ENCODE measurements at regions of chr3 and their contacts with region 1.

Region 1: DNA sequence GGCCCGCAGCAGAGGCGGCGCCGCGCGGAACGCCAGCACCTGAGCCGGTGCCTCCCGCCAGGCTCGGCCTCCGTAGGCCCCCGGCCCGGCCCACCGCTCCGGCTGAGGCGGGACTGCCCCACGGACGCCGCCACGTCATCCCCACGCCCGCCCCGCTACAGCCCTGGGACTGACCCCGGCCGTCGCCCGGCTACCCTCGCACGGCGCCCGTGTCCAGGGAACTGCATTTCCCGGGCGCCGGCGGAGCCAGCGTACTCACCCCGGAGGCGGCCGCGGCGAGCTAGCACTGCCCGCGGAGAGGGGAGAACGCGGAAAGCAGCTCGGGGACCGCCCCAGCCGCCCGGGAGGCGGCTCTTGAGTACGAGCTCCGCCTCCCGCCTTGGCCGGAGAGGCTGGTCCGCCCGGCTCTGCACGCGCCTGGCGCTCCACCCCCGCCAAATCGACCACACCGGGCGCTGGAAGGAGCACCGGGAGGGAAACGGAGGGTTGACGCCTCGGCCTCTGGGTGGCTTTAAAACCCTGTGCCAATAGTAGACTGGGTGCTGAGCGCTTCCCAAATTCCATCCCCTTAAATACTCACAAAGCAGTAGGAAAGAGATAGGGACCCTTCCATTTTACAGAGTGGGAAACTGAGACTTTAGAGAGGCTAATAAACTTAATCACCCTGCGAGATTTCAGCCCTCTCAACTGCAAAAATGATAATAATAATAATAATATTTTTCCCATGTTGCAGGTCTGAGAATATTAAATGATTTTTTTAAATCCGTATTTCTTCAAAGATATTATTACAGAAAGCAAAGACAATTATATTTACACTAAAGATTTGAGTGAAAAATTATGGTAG is at the start of gene B4GALT4:
- DNase-seq: peak; percentile 94
- H3K4me3 Mint-ChIP-seq: peak within 1 kb of the TSS; percentile 88
- H3K27ac Mint-ChIP-seq: peak within 1 kb of the TSS; percentile 82
- H3K4me1 Mint-ChIP-seq: peaks cover 34% of the 10 kb centered on the region
- H3K27me3 Mint-ChIP-seq: no peaks in the 10 kb centered on the region
- total RNA-seq, gene B4GALT4: 14.8 and 15.5 TPM in 2 replicates

Region 2: GRCh38 chr3:118791246-118791645 is 449.6 kb before region 1 on chr3:
- intact Hi-C with region 1: no loop called
- DNase-seq: no peak
- H3K4me3 Mint-ChIP-seq: no peak overlapping the region
- H3K27ac Mint-ChIP-seq: no peak overlapping the region
- H3K4me1 Mint-ChIP-seq: no peaks in the 10 kb centered on the region
- H3K27me3 Mint-ChIP-seq: peaks cover 2% of the 10 kb centered on the region

Region 3: DNA sequence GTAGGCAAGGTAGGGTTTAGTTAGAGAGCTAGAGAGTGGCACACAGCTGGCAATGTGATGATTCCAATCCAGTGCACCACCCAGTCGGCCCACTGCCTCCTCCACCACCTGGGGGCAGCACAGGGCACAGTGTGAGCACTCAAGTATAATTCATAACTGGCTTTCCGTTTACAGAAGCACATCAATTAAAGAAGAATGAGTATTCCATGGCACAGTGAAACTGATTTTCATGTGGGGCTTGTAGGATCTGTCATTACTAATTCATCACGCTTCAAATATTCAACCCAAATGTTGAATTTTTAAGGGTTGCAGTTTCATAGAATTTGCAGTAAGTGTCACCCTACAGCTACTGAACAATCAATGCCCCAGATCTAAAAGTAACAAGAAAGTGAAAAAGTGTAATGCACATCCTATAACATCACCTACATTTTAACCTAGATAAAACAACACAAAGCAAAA is 356.0 kb before region 1 on chr3:
- intact Hi-C with region 1: loop called (anchors 1 kb)
- DNase-seq: peak; percentile 92
- H3K4me3 Mint-ChIP-seq: no peak overlapping the region
- H3K27ac Mint-ChIP-seq: no peak overlapping the region
- H3K4me1 Mint-ChIP-seq: peaks cover 2% of the 10 kb centered on the region
- H3K27me3 Mint-ChIP-seq: peaks cover 19% of the 10 kb centered on the region

Region 4: GRCh38 chr3:119034256-119035013 is 206.4 kb before region 1 on chr3 and contains the start of gene IGSF11:
- intact Hi-C with region 1: loop called (anchors 2 kb)
- DNase-seq: peak; percentile 90
- H3K4me3 Mint-ChIP-seq: peak within 1 kb of the TSS; percentile 85
- H3K27ac Mint-ChIP-seq: no peak within 1 kb of the TSS
- H3K4me1 Mint-ChIP-seq: peaks cover 8% of the 10 kb centered on the region
- H3K27me3 Mint-ChIP-seq: peaks cover 58% of the 10 kb centered on the region
- total RNA-seq, gene IGSF11: 0.47 TPM in 1 of 2 replicates, not detected in the other

Region 5: DNA sequence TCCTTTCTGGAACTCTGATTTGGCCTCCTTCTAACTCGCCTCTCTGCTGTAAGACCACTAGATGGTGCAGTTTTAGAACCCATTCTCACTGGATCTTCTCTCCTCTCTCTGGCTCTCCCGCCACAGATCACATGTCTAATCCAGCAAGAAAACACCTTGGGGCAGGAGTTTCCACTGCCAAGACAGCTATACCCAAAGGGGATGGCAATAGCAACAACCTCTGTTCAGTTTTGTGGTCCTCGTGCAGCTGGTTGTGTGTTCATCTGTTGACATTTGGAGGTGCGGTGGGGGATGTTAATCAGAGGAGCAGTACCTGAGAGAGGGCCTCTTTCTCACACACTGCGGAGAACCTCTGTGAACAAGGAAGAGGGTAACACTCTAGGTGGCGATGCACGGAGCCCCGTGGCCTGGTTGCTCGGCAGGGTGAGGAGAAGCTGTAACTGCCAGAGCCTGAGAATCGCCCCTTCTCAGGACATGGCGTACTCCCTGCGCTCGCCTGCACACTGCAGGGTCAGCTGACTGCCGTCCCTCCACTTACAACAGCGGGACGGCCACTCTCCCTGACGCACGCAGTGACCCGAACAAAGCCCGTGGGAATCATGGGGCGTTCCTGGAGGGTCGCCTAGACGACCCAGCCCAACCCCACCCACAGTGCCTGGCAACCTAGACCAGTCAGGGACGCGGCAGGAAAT is 95.2 kb before region 1 on chr3 and contains the start of gene TEX55:
- intact Hi-C with region 1: loop called (anchors 1 kb)
- DNase-seq: peak; percentile 66
- H3K4me3 Mint-ChIP-seq: no peak within 1 kb of the TSS
- H3K27ac Mint-ChIP-seq: no peak within 1 kb of the TSS
- H3K4me1 Mint-ChIP-seq: peaks cover 2% of the 10 kb centered on the region
- H3K27me3 Mint-ChIP-seq: no peaks in the 10 kb centered on the region
- total RNA-seq, gene TEX55: not detected in 2 replicates

Region 6: DNA sequence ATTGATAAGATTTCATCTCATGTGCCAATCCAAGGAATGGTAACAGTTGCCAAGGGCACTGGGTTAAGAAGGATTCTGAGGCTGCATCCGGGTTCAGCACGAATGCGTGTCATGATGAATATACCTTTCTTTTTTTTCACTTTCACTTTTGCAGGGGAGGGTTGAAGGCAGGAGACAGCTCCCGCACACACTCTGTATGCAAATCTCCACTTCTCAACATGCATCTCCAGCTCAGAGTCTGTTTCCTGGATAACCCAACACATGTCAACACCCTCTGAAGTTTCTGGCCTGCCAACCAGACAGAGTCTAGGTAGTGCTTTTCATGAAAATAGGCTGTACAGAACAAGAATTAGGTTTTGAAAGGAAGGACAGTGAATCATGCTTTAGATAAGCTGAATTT is 21.7 kb before region 1 on chr3:
- intact Hi-C with region 1: loop called (anchors 1 kb)
- DNase-seq: peak; percentile 85
- H3K4me3 Mint-ChIP-seq: peak overlapping the region; percentile 62
- H3K27ac Mint-ChIP-seq: peak overlapping the region; percentile 91
- H3K4me1 Mint-ChIP-seq: peaks cover 20% of the 10 kb centered on the region
- H3K27me3 Mint-ChIP-seq: no peaks in the 10 kb centered on the region

Region 7: DNA sequence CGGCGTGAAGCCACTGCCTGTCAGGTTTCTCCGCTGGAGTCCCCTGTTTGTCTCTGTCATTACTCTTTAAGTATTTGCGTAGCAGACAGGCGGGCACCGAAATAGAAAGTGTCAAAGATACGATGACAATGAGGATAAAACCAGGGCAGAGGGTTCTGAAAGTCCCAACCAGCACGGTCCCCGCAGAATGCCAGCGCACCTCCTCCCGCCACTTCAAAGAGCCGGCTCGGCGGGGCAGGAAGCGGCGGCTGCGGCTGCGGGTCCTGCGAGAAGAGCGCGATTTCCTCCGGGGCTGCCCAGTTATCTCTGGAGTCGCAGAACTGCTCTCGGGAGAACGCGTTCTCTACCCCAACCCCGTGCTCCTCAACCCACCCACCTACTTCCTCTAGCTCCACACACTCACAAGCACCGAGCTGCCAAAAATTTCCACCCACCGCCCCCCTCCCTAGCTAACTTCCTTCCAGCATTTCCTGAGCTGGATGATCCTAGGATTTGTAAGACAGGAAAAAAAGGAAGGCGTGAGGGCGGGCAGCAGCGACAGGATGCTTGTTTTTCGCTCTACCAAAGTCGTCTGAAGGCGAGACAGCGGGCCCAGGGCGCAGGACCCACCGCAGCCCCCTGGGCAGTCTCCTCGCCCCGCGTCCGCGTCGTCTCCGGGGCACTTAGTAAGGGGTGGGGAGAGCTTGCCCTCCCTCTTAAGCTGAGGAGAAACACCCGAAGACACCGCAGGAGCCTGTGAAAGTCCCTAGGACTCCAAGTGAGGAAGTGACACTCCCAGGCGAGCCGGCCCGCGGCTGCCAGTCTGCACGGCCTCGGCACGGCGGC is 53.3 kb after region 1 on chr3 and contains the start of gene ARHGAP31:
- intact Hi-C with region 1: loop called (anchors 1 kb)
- DNase-seq: peak; percentile 95
- H3K4me3 Mint-ChIP-seq: peak within 1 kb of the TSS; percentile 86
- H3K27ac Mint-ChIP-seq: peak within 1 kb of the TSS; percentile 89
- H3K4me1 Mint-ChIP-seq: peaks cover 37% of the 10 kb centered on the region
- H3K27me3 Mint-ChIP-seq: peaks cover 14% of the 10 kb centered on the region
- total RNA-seq, gene ARHGAP31: 9.5 and 11.0 TPM in 2 replicates